CD4-positive, alpha-beta T cell (primary cell): ENCODE measurements at regions of chr11 and their contacts with region 1.

Region 1: GRCh38 chr11:92057849-92058442 is 166.7 kb upstream of the FAT3 start:
- DNase-seq: no peak
- ATAC-seq: no peak
- H3K4me3 ChIP-seq: no peak overlapping the region
- H3K4me3 Mint-ChIP-seq: no peak overlapping the region
- H3K27ac ChIP-seq: no peak overlapping the region
- H3K27ac Mint-ChIP-seq: no peak overlapping the region
- H3K4me1 ChIP-seq: no peaks in the 10 kb centered on the region
- H3K4me1 Mint-ChIP-seq: no peaks in the 10 kb centered on the region
- H3K27me3 ChIP-seq: no peaks in the 10 kb centered on the region
- H3K27me3 Mint-ChIP-seq: no peaks in the 10 kb centered on the region
- CTCF ChIP-seq: no peak

Region 2: DNA sequence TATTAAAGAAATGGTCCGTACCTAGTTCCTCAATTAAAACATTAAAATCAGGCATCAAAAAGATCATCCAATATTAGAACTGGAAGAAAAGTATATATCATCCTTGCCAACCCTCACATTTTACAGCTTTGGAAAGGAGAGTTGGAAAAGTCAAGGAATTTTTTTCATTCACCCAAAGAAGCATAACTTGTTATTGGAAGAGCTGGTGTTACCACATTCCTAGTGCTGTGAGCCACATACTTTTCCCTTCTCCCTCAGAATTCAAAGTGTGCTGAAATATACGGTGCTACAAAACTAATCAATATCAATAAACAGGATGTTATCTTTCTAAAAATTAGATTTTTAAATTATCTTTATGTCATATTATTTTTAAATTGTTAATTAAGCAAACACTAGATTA is 35.4 kb before region 1 on chr11:
- CTCF ChIA-PET with region 1: no interaction called
- POLR2A ChIA-PET with region 1: no interaction called
- intact Hi-C with region 1: loop called in 1 of 2 experiments (anchors 5 kb)
- DNase-seq: no peak
- ATAC-seq: no peak
- H3K4me3 ChIP-seq: no peak overlapping the region
- H3K4me3 Mint-ChIP-seq: no peak overlapping the region
- H3K27ac ChIP-seq: no peak overlapping the region
- H3K27ac Mint-ChIP-seq: no peak overlapping the region
- H3K4me1 ChIP-seq: no peaks in the 10 kb centered on the region
- H3K4me1 Mint-ChIP-seq: no peaks in the 10 kb centered on the region
- H3K27me3 ChIP-seq: no peaks in the 10 kb centered on the region
- H3K27me3 Mint-ChIP-seq: no peaks in the 10 kb centered on the region
- CTCF ChIP-seq: no peak

Region 3: DNA sequence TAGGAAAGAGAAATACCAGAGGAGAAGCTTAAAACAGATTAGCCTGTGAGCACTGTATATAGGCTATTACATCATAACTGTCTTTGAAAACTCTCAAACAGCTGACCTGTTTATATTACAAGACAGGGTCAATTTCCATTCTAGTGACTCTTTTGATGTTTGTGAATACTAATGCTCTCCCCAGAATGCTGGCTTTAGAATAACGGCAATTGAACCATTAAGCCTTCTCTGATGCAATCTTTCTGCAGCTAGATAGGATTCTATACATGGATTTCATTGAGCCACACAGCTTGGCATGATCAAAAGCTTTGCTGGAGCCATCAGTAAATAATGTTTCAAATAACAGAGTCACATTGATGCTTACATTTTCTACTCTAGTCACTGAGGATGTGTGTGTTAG is 44.0 kb after region 1 on chr11:
- CTCF ChIA-PET with region 1: no interaction called
- POLR2A ChIA-PET with region 1: no interaction called
- intact Hi-C with region 1: no loop called
- DNase-seq: no peak
- ATAC-seq: no peak
- H3K4me3 ChIP-seq: no peak overlapping the region
- H3K4me3 Mint-ChIP-seq: no peak overlapping the region
- H3K27ac ChIP-seq: no peak overlapping the region
- H3K27ac Mint-ChIP-seq: no peak overlapping the region
- H3K4me1 ChIP-seq: no peaks in the 10 kb centered on the region
- H3K4me1 Mint-ChIP-seq: no peaks in the 10 kb centered on the region
- H3K27me3 ChIP-seq: no peaks in the 10 kb centered on the region
- H3K27me3 Mint-ChIP-seq: no peaks in the 10 kb centered on the region
- CTCF ChIP-seq: no peak

Region 4: DNA sequence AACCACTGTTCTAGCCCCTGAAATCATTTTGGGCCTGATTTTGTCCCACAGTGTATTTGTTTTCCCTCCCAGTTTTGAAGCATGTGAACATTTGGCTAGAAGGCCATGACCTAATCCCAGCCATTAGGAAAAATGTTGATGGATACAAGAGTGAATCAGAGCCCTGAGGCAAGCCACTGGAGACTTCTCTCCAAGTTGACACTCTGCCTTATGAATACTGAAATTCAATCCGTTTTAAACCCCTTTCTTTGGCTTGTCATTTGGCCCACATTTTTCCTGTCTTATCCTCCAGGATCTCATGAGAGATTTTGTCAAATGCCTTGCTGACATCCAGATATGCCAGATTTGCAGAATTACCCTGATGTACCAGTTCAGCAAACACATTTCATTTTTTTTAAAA is 325.5 kb after region 1 on chr11:
- CTCF ChIA-PET with region 1: no interaction called
- POLR2A ChIA-PET with region 1: no interaction called
- intact Hi-C with region 1: no loop called
- DNase-seq: no peak
- ATAC-seq: no peak
- H3K4me3 ChIP-seq: no peak overlapping the region
- H3K4me3 Mint-ChIP-seq: no peak overlapping the region
- H3K27ac ChIP-seq: no peak overlapping the region
- H3K27ac Mint-ChIP-seq: no peak overlapping the region
- H3K4me1 ChIP-seq: no peaks in the 10 kb centered on the region
- H3K4me1 Mint-ChIP-seq: no peaks in the 10 kb centered on the region
- H3K27me3 ChIP-seq: no peaks in the 10 kb centered on the region
- H3K27me3 Mint-ChIP-seq: no peaks in the 10 kb centered on the region
- CTCF ChIP-seq: no peak